Thyroid gland (tissue), 4 donors: ENCODE measurements at regions of chr6 and their contacts with region 1.

Region 1: DNA sequence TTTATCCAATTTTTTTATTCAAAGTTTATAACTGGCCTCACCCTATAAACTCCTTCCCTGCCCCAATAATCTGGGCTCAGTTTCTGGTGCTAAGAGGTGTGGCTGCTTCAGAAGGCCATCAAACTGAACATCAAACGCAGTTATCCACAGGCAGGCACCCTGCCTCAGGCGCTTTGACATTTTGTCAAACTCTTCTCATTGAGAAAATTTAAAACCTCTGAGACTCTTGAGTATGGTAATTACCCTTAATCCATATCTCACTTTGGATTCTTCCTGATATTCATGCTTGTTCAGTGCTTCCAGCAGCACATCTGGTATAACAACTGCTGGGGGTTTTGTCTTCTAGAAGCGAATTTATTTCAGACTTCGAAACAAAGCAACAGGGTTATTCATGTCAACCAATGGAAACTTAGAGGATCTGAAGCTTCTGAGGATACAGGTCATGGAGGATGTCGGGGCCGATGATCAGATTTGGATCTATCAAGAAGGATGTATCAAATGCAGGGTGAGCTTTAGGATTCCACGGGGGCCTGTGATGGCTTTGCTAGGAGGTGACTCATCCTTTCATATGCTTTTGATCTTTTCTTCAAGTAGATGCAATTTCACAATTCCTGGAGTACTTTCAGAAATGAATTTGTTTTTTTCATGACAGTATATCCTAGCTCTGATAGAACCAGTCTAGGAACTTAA is 68.2 kb downstream of the RTN4IP1 start:
- DNase-seq: no peak
- H3K4me3 ChIP-seq: no peak overlapping the region
- H3K27ac ChIP-seq: peak overlapping the region; percentile 47 to 80 (median 48)
- H3K4me1 ChIP-seq: peaks cover 11 to 13% of the 10 kb centered on the region in 2 donors
- H3K27me3 ChIP-seq: no peaks in the 10 kb centered on the region
- CTCF ChIP-seq: no peak
- POLR2A ChIP-seq: no peak

Region 2: GRCh38 chr6:106339334-106340029 is 221.7 kb before region 1 on chr6:
- intact Hi-C with region 1: loop called (anchors 10 kb)
- DNase-seq: peak; percentile 44 to 50
- H3K4me3 ChIP-seq: no peak overlapping the region
- H3K27ac ChIP-seq: no peak overlapping the region
- H3K4me1 ChIP-seq: no peaks in the 10 kb centered on the region
- H3K27me3 ChIP-seq: no peaks in the 10 kb centered on the region
- CTCF ChIP-seq: peak in 5 of 6 experiments; percentile 49 to 68 (median 59)
- POLR2A ChIP-seq: no peak

Region 3: DNA sequence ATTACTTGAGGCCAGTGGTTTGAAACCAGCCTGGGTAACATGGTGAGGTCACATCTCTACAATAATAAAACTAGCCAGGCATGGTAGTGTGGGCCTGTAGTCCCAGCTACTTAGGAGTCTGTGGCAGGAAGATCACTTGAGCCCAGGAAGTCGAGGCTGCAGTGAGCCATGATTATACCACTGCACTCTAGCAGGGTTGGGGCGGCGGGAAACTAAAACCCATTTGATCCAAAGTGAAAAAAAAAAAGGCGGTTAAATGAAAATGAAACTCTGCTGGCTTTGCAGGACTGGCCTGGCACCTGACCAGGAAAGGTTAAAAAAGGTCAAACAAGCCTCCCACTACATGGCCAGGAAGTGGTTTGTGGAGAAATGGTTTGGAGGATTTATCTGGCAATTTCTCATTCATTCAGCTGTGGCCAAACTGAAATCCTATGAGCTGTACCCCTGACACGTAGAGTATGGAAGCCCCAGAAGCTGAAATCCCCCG is 503.5 kb after region 1 on chr6:
- intact Hi-C with region 1: no loop called
- DNase-seq: peak; percentile 54 to 56
- H3K4me3 ChIP-seq: no peak overlapping the region
- H3K27ac ChIP-seq: no peak overlapping the region
- H3K4me1 ChIP-seq: peaks cover 0 to 7% of the 10 kb centered on the region in 2 donors
- H3K27me3 ChIP-seq: no peaks in the 10 kb centered on the region
- CTCF ChIP-seq: no peak
- POLR2A ChIP-seq: no peak